ENCODE measurements at regions of chr9 and their contacts with region 1.

Region 1: DNA sequence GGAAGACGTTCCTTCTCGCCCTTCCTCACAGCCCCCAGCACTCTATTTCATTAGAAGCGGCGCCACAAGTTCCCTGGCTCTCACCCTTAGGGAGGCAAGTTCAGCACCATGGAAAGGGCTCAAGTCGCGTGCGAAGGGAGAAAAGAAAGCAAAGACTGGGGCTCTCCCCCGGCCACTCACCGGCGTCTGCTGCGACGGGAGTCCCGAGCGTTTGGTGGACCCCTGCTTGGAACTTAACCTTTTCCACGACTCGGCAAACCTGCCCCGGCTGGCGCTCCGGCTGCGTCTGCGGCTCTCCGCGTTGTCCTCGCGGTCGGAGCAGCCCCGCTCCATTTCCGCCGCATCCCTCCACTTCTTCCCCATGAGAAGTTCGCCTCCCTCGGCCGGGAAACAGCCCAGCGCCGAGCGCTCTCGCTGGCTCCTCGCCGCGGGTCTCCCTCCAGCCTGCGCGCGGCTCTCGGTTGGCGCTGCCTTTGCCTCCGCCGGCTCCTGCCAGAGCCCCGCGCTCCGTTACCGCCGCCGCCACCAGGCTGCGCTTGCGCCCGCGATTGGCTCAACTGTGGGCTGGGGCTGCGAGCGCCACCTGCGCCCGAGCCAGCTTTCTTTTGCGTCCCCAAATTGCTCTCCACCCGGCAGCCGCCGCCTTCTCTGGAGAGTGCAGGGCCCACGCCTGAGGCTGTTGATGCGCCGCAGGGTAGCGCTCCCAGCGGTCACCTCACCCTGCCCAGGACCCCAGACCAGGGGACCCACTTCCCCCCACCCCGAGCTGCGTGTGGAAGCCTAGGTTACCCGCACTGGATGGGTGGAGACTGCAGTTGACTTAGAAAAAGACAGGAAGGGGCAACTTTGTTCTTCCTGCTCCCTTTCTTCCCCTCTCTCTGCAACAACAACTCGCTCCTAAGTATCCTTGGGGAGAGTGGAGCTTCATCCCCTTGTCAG is 321.6 kb downstream of the CEMIP2 start:
- DNase-seq: peak; percentile 61
- H3K4me3 Mint-ChIP-seq: peak overlapping the region; percentile 67
- H3K27ac Mint-ChIP-seq: no peak overlapping the region
- H3K4me1 Mint-ChIP-seq: no peaks in the 10 kb centered on the region
- H3K27me3 Mint-ChIP-seq: peaks cover 44% of the 10 kb centered on the region
- CTCF ChIP-seq: no peak

Region 2: GRCh38 chr9:69582544-69583297 is 1864.0 kb before region 1 on chr9:
- CTCF ChIA-PET with region 1: no interaction called
- POLR2A ChIA-PET with region 1: no interaction called
- intact Hi-C with region 1: loop called (anchors 10 kb)
- DNase-seq: peak; percentile 7
- H3K4me3 Mint-ChIP-seq: no peak overlapping the region
- H3K27ac Mint-ChIP-seq: no peak overlapping the region
- H3K4me1 Mint-ChIP-seq: no peaks in the 10 kb centered on the region
- H3K27me3 Mint-ChIP-seq: peaks cover 14% of the 10 kb centered on the region
- CTCF ChIP-seq: no peak